ENCODE measurements at regions of chr10 and their contacts with region 1.

Region 1: DNA sequence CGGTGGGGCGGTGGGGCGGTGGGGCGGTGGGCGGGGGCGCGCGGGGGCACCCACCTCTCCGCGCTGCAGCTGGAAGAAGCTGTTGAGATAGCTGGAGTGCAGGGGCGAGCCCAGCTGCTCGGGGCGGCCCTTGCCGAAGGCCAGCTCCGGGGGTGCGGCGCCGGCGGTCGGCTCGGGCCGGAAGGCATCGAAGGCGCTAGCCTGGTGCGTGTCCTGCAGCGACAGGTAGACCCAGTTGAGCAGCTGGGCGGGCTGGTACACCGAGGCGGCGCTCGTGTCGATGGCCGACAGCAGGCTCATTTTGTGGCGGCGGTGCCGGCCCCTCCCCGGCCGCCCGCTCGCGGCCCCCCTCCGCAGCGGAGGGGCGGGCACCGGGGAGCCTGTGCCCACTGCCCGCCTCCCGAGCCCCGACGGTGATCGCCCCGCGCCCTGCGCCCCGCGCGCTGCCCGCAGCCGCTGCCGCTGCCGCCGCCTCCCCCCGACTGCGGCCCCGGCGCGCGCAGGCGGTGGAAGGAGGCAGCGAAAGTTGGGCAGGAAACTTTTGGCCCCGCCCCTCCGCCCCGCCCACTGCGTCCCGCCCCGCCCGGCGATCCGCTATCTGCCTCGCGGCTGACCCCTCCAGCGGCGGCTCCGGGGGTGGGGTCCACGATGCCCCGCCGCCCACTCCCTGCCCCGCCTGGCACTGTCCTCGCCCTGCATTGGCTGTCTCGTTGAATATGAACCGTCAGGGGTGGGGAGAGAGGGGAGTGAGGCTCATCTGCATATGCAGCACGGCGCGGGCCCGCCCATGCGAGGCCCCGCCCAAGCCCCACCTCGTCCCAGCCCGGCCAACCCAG is at the start of gene ZCCHC24:
- DNase-seq: peak; percentile 98 to 99
- H3K4me3 ChIP-seq: peak within 1 kb of the TSS; percentile 93 to 95
- H3K27ac ChIP-seq: peak within 1 kb of the TSS; percentile 94 to 99
- H3K4me1 ChIP-seq: peaks cover 8 to 36% of the 10 kb centered on the region in 2 donors
- H3K27me3 ChIP-seq: no peaks in the 10 kb centered on the region
- CTCF ChIP-seq: peak in 1 of 3 experiments; percentile 23
- total RNA-seq, gene ZCCHC24: 180 TPM

Region 2: DNA sequence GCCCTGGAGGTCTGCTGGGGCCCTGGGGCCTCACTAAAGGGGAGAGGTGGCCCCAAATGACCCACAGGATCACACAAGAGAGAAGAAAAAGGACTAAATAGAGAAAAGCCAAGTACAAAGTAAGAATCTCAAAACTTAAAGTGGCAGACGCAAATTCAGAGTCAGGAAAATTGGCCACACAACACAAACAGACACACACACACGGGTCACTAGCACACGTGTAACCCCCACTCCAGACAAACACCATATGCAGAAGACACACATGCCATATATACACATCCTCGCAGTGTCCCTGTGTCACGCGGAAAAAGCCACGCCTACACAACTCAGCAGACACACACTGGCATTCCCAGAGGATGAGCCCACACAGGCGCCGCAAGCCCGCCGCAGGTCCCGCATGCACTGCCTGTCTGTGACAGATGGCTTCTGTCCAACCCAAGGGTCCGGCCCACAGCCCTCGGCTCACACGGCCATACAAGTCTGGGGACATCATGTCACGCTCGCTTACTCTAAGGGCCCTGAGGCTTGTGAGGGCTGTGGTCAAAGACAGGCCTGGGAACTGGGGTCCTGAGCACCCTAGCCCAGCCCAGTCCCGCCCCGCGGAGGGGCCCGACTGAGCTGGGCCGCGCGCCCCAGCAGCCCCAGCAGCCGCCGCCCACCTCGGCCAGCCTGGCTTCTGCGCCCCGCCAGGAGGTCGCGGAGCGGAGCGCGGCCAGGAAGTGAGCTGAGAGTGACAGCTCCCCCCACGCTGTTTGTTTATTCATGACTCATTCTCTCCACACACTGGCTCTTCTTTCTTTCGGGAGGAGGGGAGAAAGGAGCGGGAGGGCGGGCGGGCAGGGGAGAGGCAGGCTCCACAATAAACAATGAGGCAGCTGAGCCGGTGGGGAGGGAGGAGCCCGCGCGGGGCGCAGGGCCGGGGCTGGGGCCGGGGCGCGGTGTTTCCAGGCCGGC is 472.1 kb before region 1 on chr10:
- intact Hi-C with region 1: loop called (anchors 5 kb)
- DNase-seq: peak; percentile 49 to 90
- H3K4me3 ChIP-seq: peak overlapping the region; percentile 64 to 67
- H3K27ac ChIP-seq: peak overlapping the region; percentile 95 to 98
- H3K4me1 ChIP-seq: peaks cover 6 to 22% of the 10 kb centered on the region in 2 donors
- H3K27me3 ChIP-seq: no peaks in the 10 kb centered on the region
- CTCF ChIP-seq: no peak

Region 3: GRCh38 chr10:79242620-79243152 is 202.7 kb before region 1 on chr10:
- intact Hi-C with region 1: loop called (anchors 10 kb)
- DNase-seq: peak in 1 of 2 donors; percentile 80
- H3K4me3 ChIP-seq: peak overlapping the region; percentile 81 to 82
- H3K27ac ChIP-seq: peak overlapping the region; percentile 66 to 96
- H3K4me1 ChIP-seq: peaks cover 28 to 52% of the 10 kb centered on the region in 2 donors
- H3K27me3 ChIP-seq: no peaks in the 10 kb centered on the region
- CTCF ChIP-seq: no peak

Region 4: DNA sequence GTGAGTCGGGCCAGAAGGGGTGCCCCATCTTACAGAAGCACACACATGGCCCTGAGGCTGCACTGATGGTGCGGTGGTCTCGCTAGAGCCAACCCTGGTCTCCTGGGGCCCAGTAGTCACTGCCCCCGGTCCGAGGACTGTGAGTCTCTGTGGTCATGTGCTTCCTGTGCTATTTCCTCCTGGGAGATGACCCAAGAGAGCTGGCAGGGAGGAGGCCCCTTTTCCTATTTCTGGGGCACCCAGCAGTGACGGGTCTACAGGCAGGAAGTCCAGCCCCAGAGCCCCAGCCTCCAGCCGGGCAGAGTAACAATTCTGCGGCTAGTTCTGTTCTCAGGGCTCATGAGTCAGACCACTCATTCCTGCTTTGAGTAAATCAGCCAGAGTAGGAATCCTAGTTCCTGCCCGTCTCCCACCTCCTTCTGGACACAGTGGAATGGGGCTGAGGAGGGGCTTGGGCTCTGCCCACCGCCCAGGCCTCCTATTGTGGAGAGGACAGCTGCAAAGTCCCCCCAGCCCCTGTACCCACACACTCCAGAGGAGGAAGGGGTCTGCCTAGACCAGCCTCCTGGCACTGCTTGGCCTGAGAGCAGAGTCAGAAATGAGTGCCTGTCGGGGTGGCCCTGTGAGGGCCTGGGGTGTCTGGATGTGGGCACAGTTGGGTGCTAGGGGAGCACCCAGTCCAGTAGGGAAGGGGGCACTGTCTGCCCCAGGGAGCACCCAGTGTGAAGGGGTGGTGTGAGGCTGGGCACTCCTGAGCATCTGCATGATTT is 178.6 kb before region 1 on chr10:
- intact Hi-C with region 1: loop called (anchors 5 kb)
- DNase-seq: peak; percentile 86 to 96
- H3K4me3 ChIP-seq: peak overlapping the region in 1 of 2 donors; percentile 7
- H3K27ac ChIP-seq: peak overlapping the region; percentile 92 to 95
- H3K4me1 ChIP-seq: peaks cover 28 to 40% of the 10 kb centered on the region in 2 donors
- H3K27me3 ChIP-seq: no peaks in the 10 kb centered on the region
- CTCF ChIP-seq: no peak

Region 5: DNA sequence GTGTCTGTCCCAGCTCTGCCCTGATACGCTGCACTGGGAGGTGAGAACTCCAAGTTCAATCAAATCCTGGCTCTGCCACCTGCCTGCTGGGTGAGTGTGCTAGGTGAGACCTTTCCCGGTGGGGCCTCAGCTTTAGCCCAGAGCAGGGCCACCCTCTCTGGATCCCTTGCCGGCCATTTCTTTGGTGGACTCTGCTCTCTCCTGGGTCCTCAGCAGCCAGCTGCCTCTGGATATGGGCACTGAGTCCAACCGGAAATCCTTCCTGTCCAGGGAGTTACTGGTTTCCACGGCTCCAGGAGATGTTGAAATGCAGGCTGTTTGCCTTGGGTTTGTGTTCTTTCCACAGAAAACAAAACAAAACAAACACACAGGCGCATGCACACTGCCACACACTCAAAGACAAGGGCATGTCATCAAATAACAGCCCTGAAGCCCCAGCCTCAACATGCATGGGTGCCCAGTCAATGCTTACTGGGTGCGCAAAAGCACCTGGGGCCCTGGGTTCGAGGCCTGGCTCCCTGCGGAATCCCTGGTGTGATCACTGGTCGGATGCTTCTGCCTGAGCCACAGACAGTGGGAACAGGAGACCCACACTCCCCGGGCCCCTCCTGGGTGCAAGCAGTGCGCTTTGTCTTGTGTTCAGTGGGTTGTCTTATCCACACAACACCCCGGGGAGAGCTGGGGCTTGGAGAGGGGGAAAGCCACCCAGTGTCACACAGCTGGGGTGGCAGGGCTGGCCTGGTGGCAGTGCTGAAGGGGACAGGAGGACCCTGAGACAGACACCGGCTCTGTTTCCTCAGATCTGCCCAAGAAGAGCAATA is 65.0 kb before region 1 on chr10:
- intact Hi-C with region 1: loop called (anchors 1 kb)
- DNase-seq: peak in 1 of 2 donors; percentile 88
- H3K4me3 ChIP-seq: peak overlapping the region in 1 of 2 donors; percentile 14
- H3K27ac ChIP-seq: peak overlapping the region; percentile 77 to 83
- H3K4me1 ChIP-seq: peaks cover 21 to 34% of the 10 kb centered on the region in 2 donors
- H3K27me3 ChIP-seq: no peaks in the 10 kb centered on the region
- CTCF ChIP-seq: no peak

Region 6: DNA sequence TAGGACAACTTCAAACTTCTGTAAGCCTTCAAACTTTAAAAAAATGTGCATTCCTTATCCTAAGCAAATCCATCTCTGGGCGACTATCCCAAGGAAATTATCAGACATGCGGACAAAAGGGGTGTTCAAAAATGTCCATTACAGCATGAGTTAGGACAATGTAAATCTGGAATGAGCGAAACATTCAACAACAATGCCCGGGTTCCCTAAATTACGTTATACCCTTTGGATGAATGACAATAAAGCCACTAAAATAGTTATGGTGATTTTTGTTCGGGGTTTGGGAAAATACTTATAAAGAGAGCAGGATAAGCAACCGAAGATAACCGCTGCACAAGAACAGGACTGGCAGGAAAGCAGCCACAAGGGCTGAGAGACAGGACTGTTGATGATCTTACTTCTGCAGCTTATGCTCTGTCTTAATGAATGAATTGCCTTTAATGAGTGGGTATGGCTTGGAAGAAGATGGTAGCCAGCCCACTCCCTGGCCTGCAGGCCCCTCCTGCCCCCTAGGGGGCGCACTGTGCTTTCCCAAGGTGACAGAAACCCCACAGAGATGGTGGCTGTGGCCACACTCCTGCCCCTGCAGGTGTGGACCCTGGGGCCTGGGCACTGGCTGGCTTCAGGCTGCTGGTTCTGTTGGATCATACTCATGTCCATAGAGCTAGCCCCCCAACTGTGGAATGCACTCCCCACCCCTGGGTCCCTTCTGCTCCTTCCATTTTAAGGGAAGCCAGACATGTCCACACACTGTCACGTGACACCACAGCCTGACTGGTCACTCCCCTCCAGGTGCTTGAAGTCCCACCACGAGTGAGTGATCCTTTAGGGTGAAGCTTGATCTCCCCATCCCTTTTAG is 45.0 kb before region 1 on chr10:
- intact Hi-C with region 1: loop called (anchors 1 kb)
- DNase-seq: no peak
- H3K4me3 ChIP-seq: peak overlapping the region in 1 of 2 donors; percentile 6
- H3K27ac ChIP-seq: peak overlapping the region; percentile 87 to 88
- H3K4me1 ChIP-seq: peaks cover 42 to 82% of the 10 kb centered on the region in 2 donors
- H3K27me3 ChIP-seq: no peaks in the 10 kb centered on the region
- CTCF ChIP-seq: peak in 2 of 3 experiments; percentile 37 to 54

Region 7: DNA sequence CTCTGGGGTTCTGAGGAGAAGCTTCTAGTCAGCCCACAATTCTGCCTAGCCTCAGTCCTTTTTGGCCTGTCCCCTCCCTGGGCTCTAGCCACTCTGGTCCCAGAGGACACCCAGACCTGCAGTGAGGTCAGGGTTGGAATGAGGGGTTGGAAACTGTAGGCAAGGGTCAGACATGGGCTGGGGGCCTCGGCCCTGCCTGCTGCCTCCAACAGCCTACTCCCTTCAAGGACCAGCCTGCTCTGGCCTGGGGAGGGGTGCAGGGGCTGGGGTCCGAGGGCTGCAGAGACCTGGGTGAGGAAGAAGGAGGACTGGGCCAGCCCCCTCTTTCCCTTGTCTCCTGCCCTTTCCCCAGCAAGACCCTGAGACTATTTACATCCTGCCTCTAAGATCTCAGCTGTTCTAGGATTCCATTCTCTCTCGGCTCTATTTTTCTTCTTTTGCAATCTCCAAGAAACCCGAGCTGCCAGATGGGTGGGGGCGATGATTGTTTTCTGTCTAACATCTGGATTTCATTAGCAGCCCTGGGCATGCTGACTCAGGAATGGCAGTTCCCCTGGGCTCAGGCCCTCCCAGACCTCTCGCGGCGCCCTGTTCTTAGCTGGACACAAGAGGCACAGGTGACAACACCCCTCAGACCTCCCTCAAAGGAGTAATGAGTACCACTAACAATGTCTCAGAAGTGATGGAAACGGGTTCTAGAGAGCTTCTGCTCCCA is 23.0 kb before region 1 on chr10:
- intact Hi-C with region 1: loop called (anchors 2 kb)
- DNase-seq: peak in 1 of 2 donors; percentile 86
- H3K4me3 ChIP-seq: peak overlapping the region in 1 of 2 donors; percentile 39
- H3K27ac ChIP-seq: peak overlapping the region; percentile 83 to 88
- H3K4me1 ChIP-seq: peaks cover 15 to 46% of the 10 kb centered on the region in 2 donors
- H3K27me3 ChIP-seq: no peaks in the 10 kb centered on the region
- CTCF ChIP-seq: no peak